ENCODE measurements at regions of chr20 and their contacts with region 1.

Region 1: DNA sequence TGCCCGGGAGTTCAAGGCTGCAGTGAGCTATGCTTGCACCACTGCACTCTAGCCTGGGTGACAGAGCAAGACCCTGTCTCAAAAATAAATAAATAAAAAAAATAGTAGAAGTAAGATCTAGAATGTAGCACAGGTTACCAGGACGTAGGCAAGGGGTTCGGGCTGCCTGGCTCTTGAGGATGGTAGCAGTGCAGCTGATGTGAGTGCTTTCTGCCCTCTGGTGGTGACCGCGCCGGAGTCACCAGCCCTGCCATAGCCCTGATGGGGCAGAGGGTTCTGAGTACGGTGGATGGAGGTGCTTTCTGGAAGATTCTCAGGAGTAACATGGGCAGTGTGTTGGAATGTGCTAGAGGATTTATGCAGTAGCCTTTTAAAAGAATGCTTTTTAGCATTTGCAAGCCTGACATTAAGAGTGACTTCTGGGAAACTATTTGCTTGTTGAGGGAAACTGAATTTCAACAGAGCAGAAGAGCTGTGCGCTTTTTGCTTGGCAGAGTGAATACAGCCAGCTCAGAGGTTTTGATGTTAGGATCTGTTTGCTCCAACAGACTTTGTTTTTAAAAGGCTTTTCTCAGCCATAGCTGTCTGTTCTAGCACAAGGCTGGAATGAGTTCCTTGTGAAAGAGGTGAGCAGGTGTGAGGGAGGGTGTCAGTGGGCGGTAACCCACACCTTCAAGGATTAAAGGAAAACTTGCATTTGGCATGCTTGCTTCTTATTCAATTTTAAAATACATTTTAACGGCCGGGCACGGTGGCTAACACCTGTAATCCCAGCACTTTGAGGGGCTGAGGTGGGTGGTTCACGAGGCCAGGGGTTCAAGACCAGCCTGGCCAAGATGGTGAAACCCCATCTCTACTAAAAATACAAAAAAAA is 65.9 kb downstream of the PTPN1 start:
- H3K4me3 ChIP-seq: no peak overlapping the region
- H3K27ac ChIP-seq: no peak overlapping the region
- H3K4me1 ChIP-seq: no peaks in the 10 kb centered on the region
- CTCF ChIP-seq: peak; percentile 79

Region 2: GRCh38 chr20:50460460-50461267 is 115.4 kb before region 1 on chr20:
- CTCF ChIA-PET with region 1: interaction called, 12 read pairs
- POLR2A ChIA-PET with region 1: no interaction called
- H3K4me3 ChIP-seq: no peak overlapping the region
- H3K27ac ChIP-seq: no peak overlapping the region
- H3K4me1 ChIP-seq: no peaks in the 10 kb centered on the region; the same call in 1 of the 2 replicates
- CTCF ChIP-seq: peak; percentile 68

Region 3: GRCh38 chr20:50478162-50479036 is 97.7 kb before region 1 on chr20:
- CTCF ChIA-PET with region 1: interaction called, 11 read pairs
- POLR2A ChIA-PET with region 1: no interaction called
- H3K4me3 ChIP-seq: no peak overlapping the region
- H3K27ac ChIP-seq: no peak overlapping the region
- H3K4me1 ChIP-seq: no peaks in the 10 kb centered on the region
- CTCF ChIP-seq: peak; percentile 50; the same call in 1 of the 2 replicates

Region 4: GRCh38 chr20:50509935-50510705 is 66.0 kb before region 1 on chr20 and contains the start of gene PTPN1:
- CTCF ChIA-PET with region 1: interaction called, 25 read pairs
- POLR2A ChIA-PET with region 1: interaction called, 3 read pairs
- H3K4me3 ChIP-seq: peak within 1 kb of the TSS; percentile 100
- H3K27ac ChIP-seq: peak within 1 kb of the TSS; percentile 45; the same call in 1 of the 2 replicates
- H3K4me1 ChIP-seq: peaks cover 14% of the 10 kb centered on the region
- CTCF ChIP-seq: peak; percentile 79; the same call in 1 of the 2 replicates

Region 5: DNA sequence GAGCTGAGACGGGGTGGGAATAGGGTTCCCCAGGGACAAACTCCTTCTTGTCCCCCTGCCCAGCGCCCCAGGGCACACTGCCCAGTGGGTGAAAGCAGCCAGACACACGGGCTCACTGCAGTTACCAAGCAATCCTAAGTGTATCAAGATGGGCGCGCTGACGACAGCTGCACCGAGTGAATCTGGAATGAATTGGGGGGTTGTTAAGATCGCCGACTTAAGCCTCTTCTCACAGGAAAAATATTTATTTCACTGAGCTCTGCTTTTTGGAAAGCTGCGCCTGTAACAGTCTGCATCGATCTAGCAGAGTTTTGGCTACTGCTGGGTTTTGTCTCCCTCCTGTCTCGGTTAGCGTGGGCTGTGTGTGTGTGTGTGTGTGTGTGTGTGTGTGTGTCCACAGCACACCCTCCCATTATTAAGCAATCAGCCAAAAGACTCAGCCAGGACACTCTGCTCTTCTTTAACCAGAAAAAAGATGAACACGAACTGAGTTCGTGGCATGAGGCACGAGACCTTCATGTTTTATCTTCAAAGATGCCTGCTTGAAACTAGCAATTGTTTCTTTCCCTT is 79.3 kb after region 1 on chr20:
- CTCF ChIA-PET with region 1: no interaction called
- POLR2A ChIA-PET with region 1: no interaction called
- H3K4me3 ChIP-seq: no peak overlapping the region
- H3K27ac ChIP-seq: no peak overlapping the region
- H3K4me1 ChIP-seq: no peaks in the 10 kb centered on the region
- CTCF ChIP-seq: no peak

Measured in HEK293 (cell line).